Posterior vena cava (tissue), 2 donors: ENCODE measurements at regions of chr14 and their contacts with region 1.

Region 1: DNA sequence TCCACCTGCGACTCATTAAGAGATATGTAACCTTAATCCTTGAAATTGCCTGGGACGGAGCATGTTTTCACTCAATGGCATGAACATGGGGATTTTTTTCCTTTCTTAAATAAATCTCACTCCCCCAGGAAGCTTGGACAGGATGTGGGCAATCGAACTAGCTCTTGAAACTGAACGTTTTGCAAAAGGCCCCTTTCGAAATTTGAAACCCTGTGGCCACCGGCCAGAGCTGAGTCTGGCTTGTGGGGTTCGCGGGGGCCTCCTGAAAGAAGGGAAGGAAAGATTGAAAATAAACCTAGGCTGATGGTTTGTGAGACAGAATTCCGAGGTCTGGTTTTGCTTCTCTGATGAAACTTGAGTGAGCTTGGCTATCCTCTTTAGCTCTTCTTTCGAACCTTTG is 101.4 kb upstream of the RTL1 start:
- DNase-seq: peak; percentile 66

Region 2: DNA sequence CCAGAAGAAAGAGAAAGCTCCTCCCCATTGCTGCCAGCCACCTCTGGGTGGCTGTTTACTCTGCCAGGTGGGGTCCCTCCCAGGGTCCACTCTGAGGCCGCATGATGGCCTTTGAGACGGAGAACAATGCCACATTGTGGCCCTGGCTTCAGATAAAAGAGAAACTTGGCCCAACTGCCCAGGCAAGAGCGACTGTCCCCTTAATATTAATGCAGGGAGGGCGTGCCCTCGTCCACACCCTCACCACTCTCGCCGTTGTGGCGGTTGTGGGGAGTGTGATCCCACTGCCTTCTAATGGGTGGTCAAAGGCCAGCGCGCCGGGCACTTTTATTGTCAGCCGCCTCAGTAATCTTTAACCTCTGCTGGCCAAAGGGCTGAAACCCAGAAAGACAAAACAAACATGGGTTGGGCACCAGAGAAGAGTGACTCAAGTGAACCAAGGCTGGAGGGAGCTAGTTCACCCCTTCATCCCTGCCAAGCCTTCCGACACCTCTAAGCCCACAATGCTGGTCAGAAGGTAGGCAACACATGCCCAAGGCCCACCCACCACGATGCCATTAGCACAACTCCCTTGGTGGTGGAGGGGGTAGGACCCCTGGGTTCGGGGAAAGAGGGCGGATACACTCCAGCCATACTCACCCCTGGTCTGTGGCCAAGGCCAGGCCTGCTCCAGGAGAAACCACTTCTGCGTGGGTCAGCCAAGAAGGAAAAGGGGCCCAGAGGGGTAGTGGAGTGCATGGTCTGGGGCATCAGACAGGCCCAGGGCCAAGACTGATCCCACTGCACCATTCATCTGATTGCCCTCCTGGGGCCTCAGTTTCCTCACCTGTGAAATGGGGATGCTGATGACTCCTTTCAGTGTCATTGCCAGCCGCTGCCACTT is 1688.4 kb before region 1 on chr14:
- intact Hi-C with region 1: no loop called
- DNase-seq: peak; percentile 53

Region 3: DNA sequence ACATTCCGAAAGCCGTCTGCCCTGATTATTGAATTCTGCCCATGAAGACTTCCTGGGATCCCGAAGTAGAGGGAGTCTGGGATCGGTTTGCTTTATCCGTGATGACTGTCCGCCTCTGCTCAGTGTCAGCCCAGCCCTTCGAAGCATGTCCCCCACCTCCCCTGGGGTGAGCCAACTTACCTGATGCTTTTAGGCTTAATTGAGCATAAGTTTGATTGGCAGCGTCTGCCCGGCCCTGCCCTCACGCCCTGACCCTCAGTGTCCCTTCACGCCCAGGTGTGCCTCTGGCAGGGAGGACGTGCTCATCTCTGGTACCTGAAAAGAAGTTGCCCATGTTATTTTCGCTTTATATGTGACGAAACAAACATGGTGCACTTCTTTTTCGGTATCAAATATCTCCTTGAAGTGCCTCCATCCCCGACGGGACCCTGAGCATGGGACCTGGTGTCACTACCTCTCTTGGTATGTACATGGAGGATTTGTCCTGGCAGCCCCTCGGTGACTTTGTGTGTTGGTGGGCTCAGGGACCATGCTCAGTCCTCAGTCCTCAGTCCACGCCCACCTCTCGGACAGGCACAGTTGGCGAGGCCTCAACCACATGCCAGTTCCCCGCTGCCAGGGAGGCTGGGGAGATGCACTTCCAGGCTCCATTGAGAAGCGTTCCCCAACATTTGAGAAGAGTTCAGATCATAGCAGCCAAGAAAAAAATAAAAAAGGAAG is 28.7 kb after region 1 on chr14:
- intact Hi-C with region 1: loop called in 1 of 2 experiments (anchors 1 kb)
- DNase-seq: peak; percentile 58